CD8-positive, alpha-beta T cell (primary cell): ENCODE measurements at regions of chr16 and their contacts with region 1.

Region 1: DNA sequence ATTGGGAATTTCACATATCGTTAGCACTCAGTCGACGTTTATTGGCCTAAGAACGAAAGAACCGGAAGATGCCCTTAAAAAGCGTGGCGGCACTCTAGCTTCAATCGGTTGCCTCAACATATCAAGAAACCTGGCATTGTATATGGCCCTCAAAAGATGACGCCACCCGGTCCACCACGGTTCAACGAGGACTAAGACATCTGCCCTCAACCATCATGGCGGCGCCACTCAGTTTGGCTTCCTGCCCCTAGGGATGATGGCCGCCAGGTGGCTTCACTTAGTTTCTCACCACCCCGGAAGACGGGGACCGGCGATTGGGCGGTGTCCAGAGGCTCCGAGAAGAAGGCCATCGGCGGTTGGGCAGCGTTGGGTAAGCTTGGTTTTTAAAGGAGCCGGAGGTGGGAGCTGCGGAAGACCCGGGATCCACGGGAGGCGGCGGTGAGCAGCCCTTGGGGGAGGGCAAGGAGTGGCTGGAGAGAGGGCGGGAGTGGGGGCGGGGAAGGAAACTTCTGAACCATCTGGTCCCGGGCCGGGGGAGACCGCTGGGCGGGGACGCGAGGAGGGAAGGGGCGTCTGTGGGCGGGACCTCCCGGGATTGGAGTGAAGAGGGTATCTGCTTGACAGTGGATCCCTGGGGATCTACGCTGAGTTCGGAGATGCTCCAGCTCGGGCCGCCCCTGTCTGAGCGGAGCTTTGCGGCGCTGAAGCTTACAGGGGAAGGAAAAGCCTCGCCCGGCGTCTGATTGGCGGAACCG is at the start of gene PRR14:
- DNase-seq: peak; percentile 96 to 100 (median 98)
- ATAC-seq: peak; percentile 85
- H3K4me3 ChIP-seq: peak within 1 kb of the TSS; percentile 92 to 100
- H3K4me3 Mint-ChIP-seq: peak within 1 kb of the TSS; percentile 99
- H3K27ac ChIP-seq: peak within 1 kb of the TSS; percentile 86 to 94
- H3K27ac Mint-ChIP-seq: peak within 1 kb of the TSS; percentile 98
- H3K4me1 ChIP-seq: peaks cover 20% of the 10 kb centered on the region
- H3K4me1 Mint-ChIP-seq: peaks cover 22% of the 10 kb centered on the region
- H3K27me3 ChIP-seq: no peaks in the 10 kb centered on the region
- H3K27me3 Mint-ChIP-seq: no peaks in the 10 kb centered on the region
- CTCF ChIP-seq: no peak
- total RNA-seq, gene PRR14: 48.4 to 51.0 TPM

Region 2: GRCh38 chr16:30370444-30371247 is 279.9 kb before region 1 on chr16 and contains the start of gene TBC1D10B:
- CTCF ChIA-PET with region 1: interaction called, 3 read pairs
- POLR2A ChIA-PET with region 1: no interaction called
- intact Hi-C with region 1: loop called (anchors 1 to 2 kb)
- DNase-seq: peak; percentile 98 to 100 (median 99)
- ATAC-seq: peak; percentile 84
- H3K4me3 ChIP-seq: peak within 1 kb of the TSS; percentile 79 to 83
- H3K4me3 Mint-ChIP-seq: peak within 1 kb of the TSS; percentile 89
- H3K27ac ChIP-seq: peak within 1 kb of the TSS; percentile 36 to 84
- H3K27ac Mint-ChIP-seq: peak within 1 kb of the TSS; percentile 87
- H3K4me1 ChIP-seq: peaks cover 42% of the 10 kb centered on the region
- H3K4me1 Mint-ChIP-seq: peaks cover 54% of the 10 kb centered on the region
- H3K27me3 ChIP-seq: no peaks in the 10 kb centered on the region
- H3K27me3 Mint-ChIP-seq: no peaks in the 10 kb centered on the region
- CTCF ChIP-seq: no peak
- total RNA-seq, gene TBC1D10B: 12.3 to 13.8 TPM

Region 3: GRCh38 chr16:30557957-30558788 is 92.4 kb before region 1 on chr16 and contains the start of gene ZNF764:
- CTCF ChIA-PET with region 1: interaction called, 3 read pairs
- POLR2A ChIA-PET with region 1: interaction called, 5 read pairs
- intact Hi-C with region 1: loop called (anchors 1 kb)
- DNase-seq: peak; percentile 88 to 98 (median 96)
- ATAC-seq: peak; percentile 90
- H3K4me3 ChIP-seq: peak within 1 kb of the TSS; percentile 68 to 84
- H3K4me3 Mint-ChIP-seq: peak within 1 kb of the TSS; percentile 84
- H3K27ac ChIP-seq: peak within 1 kb of the TSS; percentile 80 to 88
- H3K27ac Mint-ChIP-seq: peak within 1 kb of the TSS; percentile 93
- H3K4me1 ChIP-seq: peaks cover 28% of the 10 kb centered on the region
- H3K4me1 Mint-ChIP-seq: peaks cover 35% of the 10 kb centered on the region
- H3K27me3 ChIP-seq: no peaks in the 10 kb centered on the region
- H3K27me3 Mint-ChIP-seq: no peaks in the 10 kb centered on the region
- CTCF ChIP-seq: no peak
- total RNA-seq, gene ZNF764: 15.0 to 15.6 TPM

Region 4: GRCh38 chr16:30609926-30610839 is 40.4 kb before region 1 on chr16 and contains the start of gene ZNF689:
- CTCF ChIA-PET with region 1: no interaction called
- POLR2A ChIA-PET with region 1: interaction called, 3 read pairs
- intact Hi-C with region 1: loop called (anchors 1 kb)
- DNase-seq: peak; percentile 90 to 98 (median 94)
- ATAC-seq: peak; percentile 88
- H3K4me3 ChIP-seq: peak within 1 kb of the TSS; percentile 69 to 93
- H3K4me3 Mint-ChIP-seq: peak within 1 kb of the TSS; percentile 95
- H3K27ac ChIP-seq: peak within 1 kb of the TSS; percentile 91 to 93
- H3K27ac Mint-ChIP-seq: peak within 1 kb of the TSS; percentile 98
- H3K4me1 ChIP-seq: peaks cover 12% of the 10 kb centered on the region
- H3K4me1 Mint-ChIP-seq: peaks cover 24% of the 10 kb centered on the region
- H3K27me3 ChIP-seq: peaks cover 0 to 2% of the 10 kb centered on the region in 2 experiments
- H3K27me3 Mint-ChIP-seq: no peaks in the 10 kb centered on the region
- CTCF ChIP-seq: no peak
- total RNA-seq, gene ZNF689: 15.6 to 17.5 TPM

Region 5: DNA sequence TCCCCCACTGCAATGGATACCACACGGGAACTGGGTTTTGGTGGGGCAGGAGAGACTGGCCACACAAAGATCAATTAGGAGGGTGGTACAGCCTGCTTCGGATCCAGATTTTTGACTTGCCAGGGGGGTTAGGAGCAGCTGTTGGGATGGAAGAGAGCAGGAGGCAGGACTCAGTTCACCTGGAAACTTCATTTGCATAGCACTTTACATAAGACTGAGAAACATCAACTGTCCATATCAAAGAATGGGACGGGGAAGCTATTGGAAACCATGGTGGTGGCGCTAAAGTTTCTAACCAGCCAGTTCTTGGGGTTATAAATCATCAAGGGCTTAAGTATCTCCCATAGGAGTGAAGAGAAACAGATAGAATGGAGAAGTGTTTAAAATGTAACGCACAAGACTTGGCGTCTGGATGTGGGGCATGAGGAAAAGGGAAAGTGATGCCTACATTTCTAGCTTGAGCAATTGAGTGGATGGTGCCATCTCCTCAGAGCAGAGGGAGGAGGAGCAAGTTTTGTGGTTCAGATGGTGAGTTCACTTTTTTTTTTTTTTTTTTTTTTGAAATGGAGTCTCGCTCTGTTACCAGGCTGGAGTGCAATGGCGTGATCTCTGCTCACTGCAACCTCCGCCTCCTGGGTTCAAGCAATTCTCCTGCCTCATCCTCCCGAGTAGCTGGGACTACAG is 42.0 kb after region 1 on chr16:
- CTCF ChIA-PET with region 1: interaction called, 73 read pairs
- POLR2A ChIA-PET with region 1: interaction called, 8 read pairs
- intact Hi-C with region 1: loop called (anchors 1 kb)
- DNase-seq: no peak
- ATAC-seq: no peak
- H3K4me3 ChIP-seq: no peak overlapping the region
- H3K4me3 Mint-ChIP-seq: no peak overlapping the region
- H3K27ac ChIP-seq: no peak overlapping the region
- H3K27ac Mint-ChIP-seq: no peak overlapping the region
- H3K4me1 ChIP-seq: peaks cover 7% of the 10 kb centered on the region
- H3K4me1 Mint-ChIP-seq: peaks cover 15% of the 10 kb centered on the region
- H3K27me3 ChIP-seq: no peaks in the 10 kb centered on the region
- H3K27me3 Mint-ChIP-seq: no peaks in the 10 kb centered on the region
- CTCF ChIP-seq: no peak